CD8-positive, alpha-beta memory T cell (primary cell): ENCODE measurements at regions of chr15 and their contacts with region 1.

Region 1: GRCh38 chr15:58342508-58342907 is 89.3 kb upstream of the LIPC start:
- DNase-seq: no peak
- H3K4me3 ChIP-seq: no peak overlapping the region
- H3K4me3 Mint-ChIP-seq: no peak overlapping the region
- H3K27ac ChIP-seq: no peak overlapping the region
- H3K27ac Mint-ChIP-seq: no peak overlapping the region
- H3K4me1 ChIP-seq: no peaks in the 10 kb centered on the region
- H3K4me1 Mint-ChIP-seq: no peaks in the 10 kb centered on the region
- H3K27me3 ChIP-seq: no peaks in the 10 kb centered on the region
- H3K27me3 Mint-ChIP-seq: peaks cover 3 to 5% of the 10 kb centered on the region in 2 donors

Region 2: GRCh38 chr15:58269455-58270414 is 72.8 kb before region 1 on chr15:
- CTCF ChIA-PET with region 1: no interaction called
- POLR2A ChIA-PET with region 1: interaction called, 12 read pairs
- DNase-seq: peak in 3 of 5 donors; percentile 2 to 48 (median 16)
- H3K4me3 ChIP-seq: no peak overlapping the region
- H3K4me3 Mint-ChIP-seq: peak overlapping the region in 1 of 7 donors; percentile 43
- H3K27ac ChIP-seq: no peak overlapping the region
- H3K27ac Mint-ChIP-seq: peak overlapping the region in 2 of 8 donors; percentile 79 to 83
- H3K4me1 ChIP-seq: peaks cover 6% of the 10 kb centered on the region
- H3K4me1 Mint-ChIP-seq: peaks cover 2 to 11% (median 9%) of the 10 kb centered on the region in 3 donors
- H3K27me3 ChIP-seq: no peaks in the 10 kb centered on the region
- H3K27me3 Mint-ChIP-seq: peaks cover 3 to 4% of the 10 kb centered on the region in 2 donors

Region 3: GRCh38 chr15:58357521-58358476 is 15.3 kb after region 1 on chr15:
- CTCF ChIA-PET with region 1: no interaction called
- POLR2A ChIA-PET with region 1: no interaction called
- DNase-seq: peak in 2 of 5 donors; percentile 7 to 74
- H3K4me3 ChIP-seq: peak overlapping the region; percentile 12
- H3K4me3 Mint-ChIP-seq: peak overlapping the region in 1 of 7 donors; percentile 33
- H3K27ac ChIP-seq: no peak overlapping the region
- H3K27ac Mint-ChIP-seq: peak overlapping the region in 6 of 8 donors; percentile 1 to 52 (median 15)
- H3K4me1 ChIP-seq: peaks cover 22% of the 10 kb centered on the region
- H3K4me1 Mint-ChIP-seq: peaks cover 14 to 26% (median 24%) of the 10 kb centered on the region in 3 donors
- H3K27me3 ChIP-seq: no peaks in the 10 kb centered on the region
- H3K27me3 Mint-ChIP-seq: peaks cover 3 to 18% of the 10 kb centered on the region in 2 donors